Vagina (tissue), 2 donors: ENCODE measurements at regions of chr5 and their contacts with region 1.

Region 1: GRCh38 chr5:149561848-149562247 is 10.6 kb upstream of the CSNK1A1 start:
- DNase-seq: peak in 1 of 2 donors; percentile 84
- H3K4me3 ChIP-seq: no peak overlapping the region
- H3K27ac ChIP-seq: peak overlapping the region; percentile 86
- H3K4me1 ChIP-seq: peaks cover 49% of the 10 kb centered on the region
- H3K27me3 ChIP-seq: no peaks in the 10 kb centered on the region
- CTCF ChIP-seq: no peak
- POLR2A ChIP-seq: no peak

Region 2: DNA sequence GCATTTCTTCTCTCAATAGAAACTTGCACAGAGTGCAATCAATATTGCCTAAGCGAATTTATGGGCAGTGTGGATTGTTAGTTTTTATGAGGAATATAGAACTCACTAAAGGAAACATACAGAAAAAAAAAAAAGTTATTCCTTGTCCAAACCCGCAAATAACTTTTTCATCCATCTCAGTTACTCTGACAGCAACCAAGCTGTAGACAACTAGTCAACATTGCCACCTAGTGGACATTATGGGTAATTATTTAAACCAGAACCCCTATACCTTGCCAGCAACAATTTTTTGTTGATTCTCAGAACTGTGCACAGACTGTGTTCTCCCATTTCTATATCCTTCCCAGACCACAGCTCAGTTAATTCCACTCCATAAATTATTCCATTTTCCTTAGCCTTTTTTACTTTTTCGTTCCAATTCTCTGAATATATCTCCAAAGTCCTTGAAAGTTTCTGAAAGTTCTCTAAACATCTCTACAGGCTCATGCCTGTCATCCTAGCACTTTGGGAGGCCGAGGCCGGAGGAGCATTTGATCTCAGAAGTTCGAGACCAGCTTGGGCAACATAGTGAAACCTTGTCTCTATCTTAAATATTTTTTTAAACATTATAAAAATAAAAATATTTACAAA is 292.8 kb before region 1 on chr5:
- intact Hi-C with region 1: loop called (anchors 10 kb)
- DNase-seq: no peak
- H3K4me3 ChIP-seq: no peak overlapping the region
- H3K27ac ChIP-seq: no peak overlapping the region
- H3K4me1 ChIP-seq: peaks cover 18% of the 10 kb centered on the region
- H3K27me3 ChIP-seq: no peaks in the 10 kb centered on the region
- CTCF ChIP-seq: peak; percentile 28 to 68 (median 66)
- POLR2A ChIP-seq: no peak

Region 3: GRCh38 chr5:149442563-149443182 is 119.2 kb before region 1 on chr5:
- intact Hi-C with region 1: loop called (anchors 5 kb)
- DNase-seq: no peak
- H3K4me3 ChIP-seq: no peak overlapping the region
- H3K27ac ChIP-seq: peak overlapping the region; percentile 81
- H3K4me1 ChIP-seq: peaks cover 49% of the 10 kb centered on the region
- H3K27me3 ChIP-seq: no peaks in the 10 kb centered on the region
- CTCF ChIP-seq: peak; percentile 83 to 94 (median 93)
- POLR2A ChIP-seq: no peak

Region 4: DNA sequence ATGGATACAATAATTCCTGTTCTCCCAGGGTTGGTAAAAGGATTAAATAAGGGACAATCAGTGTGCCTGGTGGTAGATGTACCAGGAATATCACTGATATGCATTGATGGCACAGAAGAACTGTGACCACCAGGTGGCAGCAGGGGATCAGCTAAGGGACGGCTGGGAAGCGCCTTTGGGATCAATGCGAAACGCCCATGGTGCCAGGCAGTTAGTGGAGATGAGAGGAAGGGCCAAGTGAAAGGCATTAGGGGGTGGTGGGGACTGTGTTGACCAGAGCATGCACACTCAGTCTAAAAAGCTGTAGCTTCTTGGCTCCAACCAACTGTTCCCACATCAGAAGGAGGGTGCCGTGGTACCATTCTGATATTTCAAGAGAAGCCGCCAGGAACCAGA is 75.0 kb after region 1 on chr5:
- intact Hi-C with region 1: no loop called
- DNase-seq: no peak
- H3K4me3 ChIP-seq: no peak overlapping the region
- H3K27ac ChIP-seq: no peak overlapping the region
- H3K4me1 ChIP-seq: peaks cover 35% of the 10 kb centered on the region
- H3K27me3 ChIP-seq: no peaks in the 10 kb centered on the region
- CTCF ChIP-seq: peak; percentile 75 to 93 (median 87)
- POLR2A ChIP-seq: no peak

Region 5: DNA sequence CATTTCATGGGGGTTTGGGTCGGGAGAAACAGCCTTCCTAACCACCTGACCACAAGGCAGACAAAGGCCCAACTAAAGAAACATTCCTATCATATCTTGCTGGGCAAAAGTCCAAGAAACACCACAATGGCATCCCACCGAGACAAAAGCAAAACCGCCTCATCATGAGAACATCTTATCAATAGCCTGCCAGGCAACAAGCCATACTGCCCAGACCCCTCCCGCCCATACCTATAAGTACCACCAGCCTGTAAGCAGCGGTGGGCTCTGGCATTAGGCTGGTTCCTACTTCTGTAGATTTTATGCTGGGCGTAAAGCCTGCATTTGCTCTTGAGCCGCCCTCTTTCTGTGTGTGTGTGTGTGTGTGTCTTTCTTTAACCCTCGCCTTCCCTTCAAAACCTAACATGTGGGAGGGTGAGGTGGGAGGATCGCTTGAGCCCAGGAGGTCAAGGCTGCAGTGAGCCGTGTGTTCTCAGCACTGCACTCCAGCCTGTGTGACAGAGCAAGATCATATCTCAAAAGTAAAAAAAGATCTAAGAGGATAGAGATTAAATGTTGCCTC is 325.9 kb after region 1 on chr5:
- intact Hi-C with region 1: no loop called
- DNase-seq: no peak
- H3K4me3 ChIP-seq: no peak overlapping the region
- H3K27ac ChIP-seq: no peak overlapping the region
- H3K4me1 ChIP-seq: no peaks in the 10 kb centered on the region
- H3K27me3 ChIP-seq: no peaks in the 10 kb centered on the region
- CTCF ChIP-seq: no peak
- POLR2A ChIP-seq: no peak